ENCODE measurements at regions of chr4 and their contacts with region 1.

Region 1: GRCh38 chr4:121243485-121243884 is 79.4 kb upstream of the TNIP3 start:
- DNase-seq: no peak
- CTCF ChIP-seq: no peak

Region 2: GRCh38 chr4:121122661-121123060 is 120.8 kb before region 1 on chr4:
- CTCF ChIA-PET with region 1: no interaction called
- POLR2A ChIA-PET with region 1: no interaction called
- DNase-seq: no peak
- CTCF ChIP-seq: no peak

Region 3: DNA sequence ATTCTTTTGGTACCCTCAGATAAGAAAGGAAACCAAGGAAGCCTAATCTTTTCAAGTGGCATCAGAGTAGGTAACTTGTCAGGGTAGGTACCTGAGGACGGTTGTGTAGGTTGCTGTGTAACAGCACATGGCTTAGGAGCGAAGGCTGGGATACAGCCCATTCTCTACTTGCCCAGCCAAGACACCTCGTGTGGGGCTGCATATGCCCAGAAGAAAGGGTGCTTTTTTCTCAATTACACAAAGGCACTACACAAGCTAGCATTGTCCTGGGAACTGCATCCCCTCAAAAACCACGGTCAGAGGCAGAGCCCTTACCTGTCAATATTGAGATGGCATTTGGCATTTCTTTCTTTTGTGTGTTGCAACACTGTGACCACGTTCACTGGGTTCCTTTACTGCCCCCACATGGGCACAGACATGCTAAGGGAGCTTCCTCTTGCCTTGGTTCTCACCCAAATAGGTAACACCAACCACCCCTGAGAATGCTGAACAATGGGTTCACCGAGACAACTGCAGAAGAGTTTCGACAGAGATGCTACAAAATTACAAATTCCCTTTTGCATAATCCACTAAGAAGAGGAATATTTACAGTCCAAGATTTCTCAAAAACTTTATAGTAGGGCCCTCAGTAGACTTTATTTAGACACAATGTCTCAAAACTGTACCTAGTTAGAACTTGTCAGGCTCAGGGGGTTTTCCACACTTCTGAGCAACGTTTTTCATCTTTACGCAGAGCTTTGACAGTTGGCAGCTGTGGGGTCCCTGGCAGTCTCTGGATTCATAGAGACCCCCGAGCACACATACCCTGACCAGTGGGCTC is 43.5 kb before region 1 on chr4:
- CTCF ChIA-PET with region 1: interaction called, 11 read pairs
- POLR2A ChIA-PET with region 1: no interaction called
- DNase-seq: peak; percentile 29
- CTCF ChIP-seq: no peak

Region 4: GRCh38 chr4:121219227-121219626 is 24.3 kb before region 1 on chr4:
- CTCF ChIA-PET with region 1: interaction called, 10 read pairs
- POLR2A ChIA-PET with region 1: no interaction called
- DNase-seq: no peak
- CTCF ChIP-seq: no peak

Region 5: GRCh38 chr4:121227341-121227792 is 16.1 kb before region 1 on chr4:
- CTCF ChIA-PET with region 1: interaction called, 15 read pairs
- POLR2A ChIA-PET with region 1: no interaction called
- DNase-seq: peak; percentile 23
- CTCF ChIP-seq: no peak